H1 (cell line): ENCODE measurements at regions of chr19 and their contacts with region 1.

Region 1: DNA sequence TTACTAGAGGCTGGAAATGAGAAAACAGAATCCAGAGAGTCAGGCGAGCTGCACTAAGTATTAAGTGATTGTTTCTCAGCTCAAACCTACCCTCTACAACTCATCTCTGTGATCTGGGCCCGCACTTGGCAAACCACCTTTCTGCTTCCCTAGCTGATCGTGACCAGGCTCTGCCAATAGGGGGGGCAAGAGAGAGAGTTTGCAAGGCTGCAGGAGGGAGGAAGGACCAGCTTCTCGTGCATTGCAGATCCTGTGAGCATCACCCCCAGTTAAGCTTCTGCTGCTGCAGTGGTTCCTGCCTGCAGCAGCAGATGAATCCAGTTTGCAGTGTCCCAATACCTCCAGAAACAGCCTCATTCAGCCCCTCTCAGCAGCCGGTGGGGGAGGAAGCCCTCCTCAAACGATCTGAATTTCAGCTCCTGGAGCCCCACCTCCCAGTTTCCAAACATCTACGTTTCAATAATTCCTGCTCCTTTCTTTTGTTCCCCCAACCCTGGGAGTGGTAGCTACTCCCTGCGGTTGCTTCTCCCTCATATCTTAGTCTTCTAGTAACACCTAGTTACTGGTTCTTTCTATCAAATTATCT is 20.0 kb downstream of the XRCC1 start:
- DNase-seq: peak; percentile 61 to 95
- H3K4me3 ChIP-seq: no peak overlapping the region
- H3K27ac ChIP-seq: no peak overlapping the region
- H3K4me1 ChIP-seq: 0 out of 7 replicates have a peak, but pooled peaks cover 0 to 2% (median 0%) of the 10 kb centered on the region in 4 experiments
- H3K27me3 ChIP-seq: no peaks in the 10 kb centered on the region
- CTCF ChIP-seq: peak; percentile 85 to 98 (median 93)
- EP300 ChIP-seq: no peak
- POLR2A ChIP-seq: no peak
- RAD21 ChIP-seq: peak; percentile 68 to 81

Region 2: GRCh38 chr19:43532962-43533545 is 22.2 kb before region 1 on chr19 and contains the start of gene ZNF575:
- CTCF ChIA-PET with region 1: interaction called, 122 read pairs
- POLR2A ChIA-PET with region 1: interaction called, 3 read pairs
- DNase-seq: peak; percentile 90 to 92
- H3K4me3 ChIP-seq: peak within 1 kb of the TSS; percentile 63 to 74 (median 68)
- H3K27ac ChIP-seq: no peak within 1 kb of the TSS
- H3K4me1 ChIP-seq: peaks cover 0 to 14% (median 4%) of the 10 kb centered on the region in 4 experiments; a peak in 6 of 7 replicates
- H3K27me3 ChIP-seq: no peaks in the 10 kb centered on the region
- CTCF ChIP-seq: no peak
- EP300 ChIP-seq: no peak
- POLR2A ChIP-seq: no peak
- RAD21 ChIP-seq: no peak
- total RNA-seq, gene ZNF575: not detected in 2 replicates

Region 3: DNA sequence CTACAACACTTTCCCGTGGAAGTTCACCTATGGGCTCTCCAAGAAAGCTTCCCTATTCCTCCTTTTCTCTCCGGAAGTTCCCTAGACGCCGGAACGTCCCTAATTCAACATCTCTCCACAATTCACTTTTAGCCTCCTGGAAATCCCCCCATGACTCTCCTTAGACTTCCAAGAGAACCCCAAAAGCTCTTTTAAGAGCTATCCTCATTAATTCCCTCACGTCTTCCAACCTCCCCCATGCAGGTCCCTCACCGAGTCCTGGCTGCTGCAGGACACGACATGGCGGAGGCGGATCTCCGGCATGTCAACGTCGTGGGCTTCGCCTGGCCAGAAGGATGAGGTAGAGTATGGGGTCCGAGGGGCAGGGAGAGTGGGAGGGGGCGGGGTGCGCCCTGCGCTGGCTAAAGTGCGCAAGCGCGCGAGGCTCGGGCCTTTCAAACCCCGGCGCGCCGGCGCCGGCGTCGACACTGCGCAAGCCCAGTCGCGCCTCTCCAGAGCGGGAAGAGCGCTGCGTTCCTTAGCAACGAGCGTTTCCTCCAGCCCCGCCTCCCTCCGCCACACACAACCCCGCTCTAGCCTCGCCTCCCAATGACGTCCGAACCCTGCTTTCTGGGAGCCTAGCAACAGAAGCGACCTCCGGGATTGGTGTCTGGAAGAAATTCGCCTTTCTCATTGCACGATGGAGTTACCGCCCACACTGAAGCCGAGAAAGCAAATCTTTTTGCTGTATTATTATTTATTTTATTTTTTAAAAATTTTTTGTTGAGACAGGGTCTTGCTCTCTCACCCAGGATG is 20.1 kb after region 1 on chr19 and contains the starts of genes PINLYP and XRCC1:
- CTCF ChIA-PET with region 1: interaction called, 82 read pairs
- POLR2A ChIA-PET with region 1: interaction called, 9 read pairs
- DNase-seq: peak; percentile 93 to 95
- H3K4me3 ChIP-seq: peak within 1 kb of the TSS; percentile 66 to 89 (median 76)
- H3K27ac ChIP-seq: peak within 1 kb of the TSS; percentile 68
- H3K4me1 ChIP-seq: peaks cover 0 to 13% (median 8%) of the 10 kb centered on the region in 4 experiments; a peak in 6 of 7 replicates
- H3K27me3 ChIP-seq: no peaks in the 10 kb centered on the region
- CTCF ChIP-seq: no peak
- EP300 ChIP-seq: no peak
- POLR2A ChIP-seq: peak; percentile 18 to 66
- RAD21 ChIP-seq: no peak
- total RNA-seq, gene PINLYP: 7.5 and 9.2 TPM in 2 replicates
- total RNA-seq, gene XRCC1: 42.5 and 48.5 TPM in 2 replicates

Region 4: GRCh38 chr19:43589678-43590077 is 34.4 kb after region 1 on chr19:
- CTCF ChIA-PET with region 1: interaction called, 92 read pairs
- POLR2A ChIA-PET with region 1: interaction called, 5 read pairs
- DNase-seq: no peak
- H3K4me3 ChIP-seq: no peak overlapping the region
- H3K27ac ChIP-seq: no peak overlapping the region
- H3K4me1 ChIP-seq: no peaks in the 10 kb centered on the region
- H3K27me3 ChIP-seq: no peaks in the 10 kb centered on the region
- CTCF ChIP-seq: no peak
- EP300 ChIP-seq: no peak
- POLR2A ChIP-seq: no peak
- RAD21 ChIP-seq: no peak

Region 5: GRCh38 chr19:43678512-43679261 is 123.4 kb after region 1 on chr19:
- CTCF ChIA-PET with region 1: no interaction called
- POLR2A ChIA-PET with region 1: no interaction called
- DNase-seq: no peak
- H3K4me3 ChIP-seq: no peak overlapping the region
- H3K27ac ChIP-seq: no peak overlapping the region
- H3K4me1 ChIP-seq: peaks cover 0 to 6% (median 2%) of the 10 kb centered on the region in 4 experiments; a peak in 3 of 7 replicates
- H3K27me3 ChIP-seq: no peaks in the 10 kb centered on the region
- CTCF ChIP-seq: no peak
- EP300 ChIP-seq: no peak
- POLR2A ChIP-seq: no peak
- RAD21 ChIP-seq: no peak